ENCODE measurements at regions of chr4 and their contacts with region 1.

Region 1: GRCh38 chr4:16264798-16265197 is 38.5 kb upstream of the TAPT1 start:
- DNase-seq: peak; percentile 5
- ATAC-seq: peak; percentile 85
- H3K4me3 ChIP-seq: no peak overlapping the region
- H3K27ac ChIP-seq: no peak overlapping the region
- H3K4me1 ChIP-seq: no peaks in the 10 kb centered on the region
- H3K27me3 ChIP-seq: no peaks in the 10 kb centered on the region
- CTCF ChIP-seq: peak; percentile 40 to 62 (median 46); a peak in 5 of 6 replicates
- EP300 ChIP-seq: no peak
- POLR2A ChIP-seq: no peak
- RAD21 ChIP-seq: peak; percentile 70

Region 2: DNA sequence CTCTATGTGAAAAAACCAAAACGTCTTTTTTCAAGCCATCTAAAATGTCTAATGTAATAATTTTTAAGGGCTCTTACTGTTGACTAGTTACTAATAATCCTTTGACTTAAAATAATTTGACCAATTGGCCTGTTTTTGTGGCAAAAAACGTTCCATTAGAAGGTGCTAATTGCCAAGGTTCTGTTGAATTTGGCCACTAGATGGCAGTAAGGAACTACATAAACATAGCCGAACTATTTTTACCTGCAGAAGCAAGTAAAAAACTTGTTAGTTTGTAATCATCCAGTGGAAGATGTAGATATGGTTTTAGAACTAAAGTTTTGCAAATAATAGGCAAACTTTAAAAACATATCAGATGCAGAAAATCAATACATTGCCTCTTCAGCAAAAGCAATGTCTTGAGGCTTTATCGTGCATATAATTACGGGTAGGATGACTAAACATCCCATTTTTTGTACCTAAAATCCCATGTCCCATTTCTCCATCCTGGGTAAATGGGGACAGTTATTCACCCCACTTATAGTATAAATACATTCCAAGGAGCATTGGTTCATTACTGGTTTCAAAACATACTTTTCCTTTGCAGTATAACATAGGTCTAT is 238.5 kb before region 1 on chr4:
- CTCF ChIA-PET with region 1: interaction called, 53 read pairs
- POLR2A ChIA-PET with region 1: no interaction called
- RAD21 ChIA-PET with region 1: interaction called, 5 read pairs
- SMC1A ChIA-PET with region 1: interaction called, 22 read pairs
- in situ Hi-C with region 1: no loop called
- intact Hi-C with region 1: loop called (anchors 1 kb)
- DNase-seq: peak; percentile 25
- ATAC-seq: peak; percentile 58
- H3K4me3 ChIP-seq: no peak overlapping the region
- H3K27ac ChIP-seq: no peak overlapping the region
- H3K4me1 ChIP-seq: no peaks in the 10 kb centered on the region
- H3K27me3 ChIP-seq: no peaks in the 10 kb centered on the region; a peak in 1 of 4 replicates
- CTCF ChIP-seq: peak; percentile 64 to 78 (median 64)
- EP300 ChIP-seq: no peak
- POLR2A ChIP-seq: no peak
- RAD21 ChIP-seq: peak; percentile 92

Region 3: GRCh38 chr4:16034010-16034829 is 230.6 kb before region 1 on chr4:
- CTCF ChIA-PET with region 1: interaction called, 53 read pairs
- POLR2A ChIA-PET with region 1: no interaction called
- RAD21 ChIA-PET with region 1: interaction called, 5 read pairs
- SMC1A ChIA-PET with region 1: interaction called, 22 read pairs
- in situ Hi-C with region 1: loop called (anchors 5 kb)
- intact Hi-C with region 1: no loop called
- DNase-seq: no peak
- ATAC-seq: no peak
- H3K4me3 ChIP-seq: no peak overlapping the region
- H3K27ac ChIP-seq: no peak overlapping the region
- H3K4me1 ChIP-seq: no peaks in the 10 kb centered on the region
- H3K27me3 ChIP-seq: peaks cover 2% of the 10 kb centered on the region in 2 experiments; a peak in 2 of 4 replicates
- CTCF ChIP-seq: no peak
- EP300 ChIP-seq: no peak
- POLR2A ChIP-seq: no peak
- RAD21 ChIP-seq: no peak

Region 4: DNA sequence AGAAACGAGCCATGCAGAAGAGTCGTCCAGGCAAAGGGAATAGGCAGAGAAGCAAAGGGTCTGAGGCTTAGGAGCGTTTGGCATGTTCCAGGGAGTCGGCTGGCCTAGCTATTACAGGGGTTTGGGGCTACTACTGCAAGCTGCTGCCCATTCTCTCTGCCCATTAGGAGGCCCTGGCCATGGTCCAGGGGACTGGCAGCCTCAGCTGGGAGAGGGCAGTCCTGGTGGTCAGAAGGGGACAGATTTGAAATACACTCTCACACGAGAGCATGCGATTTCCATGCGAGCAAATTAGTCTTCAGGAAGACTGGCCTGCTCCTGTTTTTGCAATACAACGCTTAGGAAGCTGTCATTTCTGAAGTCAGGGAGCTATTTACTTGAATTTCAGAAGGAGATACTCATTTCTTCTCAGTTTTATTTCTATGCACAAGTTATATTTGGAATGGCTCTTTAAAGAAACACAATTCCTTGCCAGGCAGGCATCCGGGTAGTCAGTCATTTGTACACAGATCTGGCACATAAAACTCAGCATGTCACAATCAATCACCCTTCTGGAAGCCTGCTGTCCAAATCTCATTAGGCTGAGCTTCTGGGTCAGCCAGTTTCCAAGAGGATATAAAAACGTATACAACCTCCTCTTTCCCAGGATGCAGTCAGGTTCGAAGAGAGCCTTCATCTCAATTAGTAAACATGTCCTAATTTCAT is 208.0 kb before region 1 on chr4:
- CTCF ChIA-PET with region 1: no interaction called
- POLR2A ChIA-PET with region 1: no interaction called
- RAD21 ChIA-PET with region 1: no interaction called
- SMC1A ChIA-PET with region 1: no interaction called
- in situ Hi-C with region 1: no loop called
- intact Hi-C with region 1: no loop called
- DNase-seq: no peak
- ATAC-seq: no peak
- H3K4me3 ChIP-seq: no peak overlapping the region
- H3K27ac ChIP-seq: no peak overlapping the region
- H3K4me1 ChIP-seq: no peaks in the 10 kb centered on the region
- H3K27me3 ChIP-seq: no peaks in the 10 kb centered on the region; a peak in 2 of 4 replicates
- CTCF ChIP-seq: no peak
- EP300 ChIP-seq: no peak
- POLR2A ChIP-seq: no peak
- RAD21 ChIP-seq: no peak

Region 5: DNA sequence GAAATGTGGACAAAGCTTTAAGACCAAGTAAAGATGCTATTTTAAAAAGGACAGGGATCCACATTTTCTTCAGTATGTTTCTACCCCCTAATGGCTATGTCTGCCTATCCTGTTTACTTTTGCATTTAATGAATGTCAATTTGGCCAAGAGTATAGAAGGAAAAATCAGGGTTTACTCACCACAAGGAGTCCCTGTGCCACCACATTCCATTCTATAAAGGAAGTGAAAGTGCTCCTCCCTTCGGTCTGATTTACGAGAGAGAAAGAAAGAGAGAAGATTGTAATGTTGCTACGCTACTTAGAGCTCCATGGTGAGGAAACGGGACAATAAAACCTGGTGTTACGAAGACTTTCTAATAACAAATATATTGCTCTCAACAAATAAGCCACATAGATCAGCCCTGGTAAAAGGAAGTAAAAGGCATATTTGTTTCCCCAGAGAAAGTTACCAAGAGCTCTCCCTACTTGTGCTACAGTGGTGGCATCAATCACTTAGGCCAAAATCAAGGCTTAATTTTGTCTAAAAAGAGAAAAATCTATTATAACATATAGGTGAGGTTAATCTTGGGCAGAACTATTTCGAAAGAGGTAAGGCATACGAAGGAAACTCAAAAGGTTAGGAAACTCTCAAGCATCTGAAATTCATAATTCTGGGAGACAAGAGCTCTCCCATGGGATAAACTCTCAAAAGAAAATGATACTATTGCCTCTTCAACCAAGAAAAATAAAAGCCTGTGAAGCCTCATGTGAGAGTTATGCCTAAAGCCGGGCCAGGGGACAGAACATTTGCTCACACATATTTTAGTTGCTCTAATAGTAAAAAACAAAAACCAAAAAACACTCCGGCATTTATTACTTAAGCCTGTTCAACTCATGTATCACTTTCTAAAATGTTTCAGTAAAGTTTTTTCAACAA is 68.1 kb before region 1 on chr4:
- CTCF ChIA-PET with region 1: interaction called, 23 read pairs
- POLR2A ChIA-PET with region 1: no interaction called
- RAD21 ChIA-PET with region 1: interaction called, 9 read pairs
- SMC1A ChIA-PET with region 1: interaction called, 16 read pairs
- in situ Hi-C with region 1: no loop called
- intact Hi-C with region 1: no loop called
- DNase-seq: peak; percentile 21
- ATAC-seq: peak; percentile 66
- H3K4me3 ChIP-seq: no peak overlapping the region
- H3K27ac ChIP-seq: no peak overlapping the region
- H3K4me1 ChIP-seq: peaks cover 2% of the 10 kb centered on the region; the same call in 1 of the 2 replicates
- H3K27me3 ChIP-seq: no peaks in the 10 kb centered on the region
- CTCF ChIP-seq: peak in 1 of 3 experiments; percentile 33; a peak in 2 of 6 replicates
- EP300 ChIP-seq: no peak
- POLR2A ChIP-seq: no peak
- RAD21 ChIP-seq: peak; percentile 21; the same call in 1 of the 2 replicates

Region 6: GRCh38 chr4:16205298-16206164 is 59.3 kb before region 1 on chr4:
- CTCF ChIA-PET with region 1: interaction called, 23 read pairs
- POLR2A ChIA-PET with region 1: no interaction called
- RAD21 ChIA-PET with region 1: interaction called, 24 read pairs
- SMC1A ChIA-PET with region 1: interaction called, 7 read pairs
- in situ Hi-C with region 1: no loop called
- intact Hi-C with region 1: no loop called
- DNase-seq: no peak
- ATAC-seq: peak; percentile 94
- H3K4me3 ChIP-seq: no peak overlapping the region
- H3K27ac ChIP-seq: no peak overlapping the region
- H3K4me1 ChIP-seq: peaks cover 6% of the 10 kb centered on the region
- H3K27me3 ChIP-seq: no peaks in the 10 kb centered on the region
- CTCF ChIP-seq: peak; percentile 61 to 79 (median 75)
- EP300 ChIP-seq: no peak
- POLR2A ChIP-seq: no peak
- RAD21 ChIP-seq: peak; percentile 23; the same call in 1 of the 2 replicates

Region 7: DNA sequence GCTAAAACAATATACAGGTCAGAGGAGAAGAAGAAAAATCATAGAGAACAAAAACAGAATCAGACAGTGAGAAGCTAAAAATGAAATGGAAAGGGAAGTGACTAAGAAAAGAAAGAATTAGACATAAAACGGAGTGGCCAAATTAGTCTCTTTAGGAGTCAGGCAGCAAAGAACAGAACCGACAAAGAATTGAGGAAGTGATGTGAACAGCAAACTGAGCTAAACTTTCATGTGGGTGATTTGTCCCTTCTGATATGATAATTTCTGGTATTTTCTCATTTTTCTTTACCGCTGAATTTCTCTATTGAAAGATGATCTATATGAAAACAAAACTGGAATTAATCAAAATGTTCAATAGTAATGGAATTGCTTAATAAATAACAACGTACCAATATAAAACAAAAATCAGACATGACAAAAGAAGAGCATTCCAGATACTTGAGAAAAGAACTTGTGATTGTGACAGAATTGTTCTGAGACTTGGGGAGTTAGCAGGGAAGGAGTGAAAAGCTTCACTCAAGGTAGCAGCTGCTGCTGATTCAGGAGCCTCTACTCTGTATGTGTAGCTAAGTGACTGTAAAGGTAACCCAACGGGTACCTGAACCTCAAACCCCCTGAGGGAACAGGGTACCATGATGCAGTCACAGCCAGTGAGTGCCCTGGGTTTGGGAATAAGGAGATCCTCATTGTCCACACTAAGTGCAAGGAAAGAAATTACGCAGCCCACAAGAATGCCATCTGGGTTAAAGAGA is 47.3 kb before region 1 on chr4:
- CTCF ChIA-PET with region 1: interaction called, 12 read pairs
- POLR2A ChIA-PET with region 1: no interaction called
- RAD21 ChIA-PET with region 1: interaction called, 5 read pairs
- SMC1A ChIA-PET with region 1: interaction called, 5 read pairs
- in situ Hi-C with region 1: no loop called
- intact Hi-C with region 1: no loop called
- DNase-seq: no peak
- ATAC-seq: peak; percentile 89
- H3K4me3 ChIP-seq: no peak overlapping the region
- H3K27ac ChIP-seq: peak overlapping the region; percentile 58
- H3K4me1 ChIP-seq: peaks cover 11% of the 10 kb centered on the region
- H3K27me3 ChIP-seq: no peaks in the 10 kb centered on the region
- CTCF ChIP-seq: no peak
- EP300 ChIP-seq: no peak
- POLR2A ChIP-seq: no peak
- RAD21 ChIP-seq: no peak

Region 8: GRCh38 chr4:16236402-16237023 is 28.3 kb before region 1 on chr4:
- CTCF ChIA-PET with region 1: no interaction called
- POLR2A ChIA-PET with region 1: no interaction called
- RAD21 ChIA-PET with region 1: no interaction called
- SMC1A ChIA-PET with region 1: no interaction called
- in situ Hi-C with region 1: no loop called
- intact Hi-C with region 1: no loop called
- DNase-seq: no peak
- ATAC-seq: no peak
- H3K4me3 ChIP-seq: no peak overlapping the region
- H3K27ac ChIP-seq: no peak overlapping the region
- H3K4me1 ChIP-seq: no peaks in the 10 kb centered on the region
- H3K27me3 ChIP-seq: no peaks in the 10 kb centered on the region
- CTCF ChIP-seq: no peak
- EP300 ChIP-seq: no peak
- POLR2A ChIP-seq: no peak
- RAD21 ChIP-seq: no peak

Region 9: GRCh38 chr4:16524911-16525554 is 260.2 kb after region 1 on chr4:
- CTCF ChIA-PET with region 1: no interaction called
- POLR2A ChIA-PET with region 1: no interaction called
- RAD21 ChIA-PET with region 1: no interaction called
- SMC1A ChIA-PET with region 1: no interaction called
- in situ Hi-C with region 1: no loop called
- intact Hi-C with region 1: no loop called
- DNase-seq: no peak
- ATAC-seq: no peak
- H3K4me3 ChIP-seq: no peak overlapping the region
- H3K27ac ChIP-seq: no peak overlapping the region
- H3K4me1 ChIP-seq: no peaks in the 10 kb centered on the region
- H3K27me3 ChIP-seq: no peaks in the 10 kb centered on the region; a peak in 1 of 4 replicates
- CTCF ChIP-seq: no peak
- EP300 ChIP-seq: no peak
- POLR2A ChIP-seq: no peak
- RAD21 ChIP-seq: no peak

Measured in GM12878 (cell line).